ENCODE measurements at regions of chr4 and their contacts with region 1.

Region 1: GRCh38 chr4:71785959-71786358 is 2.1 kb upstream of the GC start:
- DNase-seq: no peak
- ATAC-seq: peak in 1 of 2 donors; percentile 39

Region 2: GRCh38 chr4:71456841-71457240 is 329.1 kb before region 1 on chr4:
- intact Hi-C with region 1: no loop called
- DNase-seq: no peak
- ATAC-seq: peak; percentile 67 to 97

Region 3: GRCh38 chr4:71857713-71858451 is 71.9 kb after region 1 on chr4:
- intact Hi-C with region 1: loop called in 1 of 2 experiments (anchors 10 kb)
- DNase-seq: no peak
- ATAC-seq: no peak